GM10248 (cell line): ENCODE measurements at regions of chr5 and their contacts with region 1.

Region 1: DNA sequence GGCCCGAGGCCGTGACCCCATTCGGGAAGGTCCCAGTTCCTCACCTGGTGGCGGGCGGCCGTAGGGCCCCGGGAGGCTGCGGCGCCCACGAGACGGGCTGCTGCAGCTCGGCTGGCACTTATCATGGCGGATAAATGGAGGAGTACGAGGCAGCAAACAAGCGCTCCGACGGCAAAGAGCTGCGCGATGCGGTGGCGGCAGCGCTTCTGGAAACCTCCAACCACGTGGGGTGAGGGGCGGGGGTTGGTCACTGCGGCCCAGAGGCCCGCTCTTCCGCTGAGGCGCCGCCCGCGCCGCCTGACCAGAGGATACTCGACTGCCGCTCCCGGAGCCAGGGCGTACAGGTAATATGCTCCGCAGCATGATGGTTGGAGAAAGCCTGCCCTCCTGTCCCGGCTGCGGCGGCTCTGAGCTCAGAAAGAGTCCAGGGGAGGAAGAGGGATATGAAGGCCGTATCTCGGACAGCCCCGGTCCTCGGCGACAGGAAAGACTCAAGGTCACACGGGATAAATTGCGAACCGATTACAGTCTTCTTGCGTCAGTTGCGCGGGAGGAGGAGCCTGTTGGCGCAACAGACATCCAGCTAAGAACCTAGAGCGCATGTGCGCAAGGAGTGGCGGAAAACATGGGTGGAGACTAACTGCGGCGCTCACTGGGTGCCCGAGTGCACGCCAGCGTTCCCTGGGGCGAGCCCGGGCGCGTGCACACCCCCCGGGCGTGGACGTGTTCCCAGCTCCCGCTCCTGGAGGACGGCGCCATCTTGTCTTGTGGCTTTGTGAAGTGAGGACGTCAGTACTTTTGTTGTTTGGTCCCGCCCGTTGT is at the start of gene HSPA9:
- DNase-seq: peak; percentile 99
- CTCF ChIP-seq: no peak

Region 2: DNA sequence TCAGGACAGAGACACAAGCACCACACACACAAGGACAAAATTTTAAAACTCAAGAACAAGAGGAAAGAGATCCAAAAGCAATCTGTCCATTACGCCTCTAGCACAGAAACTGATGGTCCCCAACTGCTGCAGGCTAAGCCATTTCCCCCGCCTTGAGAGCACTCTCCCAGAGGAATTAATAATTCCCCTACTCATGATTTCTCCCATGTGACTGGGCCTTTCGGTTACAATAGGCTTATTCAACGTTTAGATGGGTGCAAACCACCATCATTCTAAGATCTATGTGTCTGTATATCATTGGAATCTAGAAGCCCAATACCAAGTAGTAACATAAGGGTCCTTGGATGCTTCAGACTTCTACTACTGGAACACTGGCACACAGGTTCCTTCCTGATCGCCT is 415.7 kb before region 1 on chr5:
- CTCF ChIA-PET with region 1: no interaction called
- POLR2A ChIA-PET with region 1: interaction called, 10 read pairs
- DNase-seq: no peak
- CTCF ChIP-seq: no peak

Region 3: GRCh38 chr5:138508963-138509362 is 66.4 kb before region 1 on chr5:
- CTCF ChIA-PET with region 1: no interaction called
- POLR2A ChIA-PET with region 1: no interaction called
- DNase-seq: no peak
- CTCF ChIP-seq: no peak

Region 4: DNA sequence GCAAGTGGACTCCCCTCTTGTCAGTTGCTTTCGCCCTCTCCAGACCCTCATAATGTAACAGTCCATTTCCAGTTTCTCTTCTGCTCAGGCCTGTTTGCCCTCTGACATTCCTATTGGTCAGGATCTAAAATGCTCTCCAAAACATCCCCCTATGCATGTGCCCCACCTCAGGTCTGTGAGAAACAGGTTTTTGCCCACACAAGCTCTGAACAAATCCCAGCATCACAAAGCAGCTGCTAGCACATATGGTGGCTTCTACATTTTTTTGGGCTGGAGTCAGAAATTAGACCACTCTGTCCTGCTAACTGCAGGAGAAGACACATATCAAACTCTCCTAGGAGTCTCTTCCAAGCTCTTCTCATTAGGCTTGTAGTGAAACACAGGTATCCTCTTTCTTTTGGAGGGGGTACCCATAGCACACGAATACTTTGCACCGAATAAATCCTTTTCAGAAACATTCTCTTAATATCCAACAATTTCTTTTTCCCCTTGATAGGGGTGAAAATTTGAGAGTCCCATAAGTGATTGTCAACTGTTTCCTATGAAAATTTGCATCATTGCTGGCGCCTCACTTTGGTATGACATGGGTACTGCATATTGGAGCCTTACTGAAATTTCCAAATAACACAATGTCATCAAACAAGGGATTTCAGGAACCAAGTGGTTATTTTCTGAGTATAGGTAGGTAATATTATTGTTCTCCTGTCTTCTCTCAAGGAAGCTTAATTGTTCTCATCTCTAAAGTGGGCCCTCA is 19.1 kb after region 1 on chr5:
- CTCF ChIA-PET with region 1: interaction called, 41 read pairs
- POLR2A ChIA-PET with region 1: no interaction called
- DNase-seq: no peak
- CTCF ChIP-seq: peak; percentile 10

Region 5: GRCh38 chr5:138601444-138601843 is 26.0 kb after region 1 on chr5:
- CTCF ChIA-PET with region 1: interaction called, 41 read pairs
- POLR2A ChIA-PET with region 1: no interaction called
- DNase-seq: no peak
- CTCF ChIP-seq: no peak